GM12878 (cell line): ENCODE measurements at regions of chr19 and their contacts with region 1.

Region 1: GRCh38 chr19:16628183-16628983 is at the start of gene MED26:
- DNase-seq: peak; percentile 53
- ATAC-seq: peak; percentile 88
- H3K4me3 ChIP-seq: peak within 1 kb of the TSS; percentile 94
- H3K27ac ChIP-seq: peak within 1 kb of the TSS; percentile 97
- H3K4me1 ChIP-seq: peaks cover 25% of the 10 kb centered on the region
- H3K27me3 ChIP-seq: no peaks in the 10 kb centered on the region
- CTCF ChIP-seq: 0 out of 6 replicates have a peak, but pooled peaks of 1 of the 3 experiments have one; percentile 3
- EP300 ChIP-seq: no peak
- POLR2A ChIP-seq: peak; percentile 88
- RAD21 ChIP-seq: peak; percentile 20; the same call in 1 of the 2 replicates
- polyA plus RNA-seq, gene MED26: 1.1 to 2.2 TPM

Region 2: DNA sequence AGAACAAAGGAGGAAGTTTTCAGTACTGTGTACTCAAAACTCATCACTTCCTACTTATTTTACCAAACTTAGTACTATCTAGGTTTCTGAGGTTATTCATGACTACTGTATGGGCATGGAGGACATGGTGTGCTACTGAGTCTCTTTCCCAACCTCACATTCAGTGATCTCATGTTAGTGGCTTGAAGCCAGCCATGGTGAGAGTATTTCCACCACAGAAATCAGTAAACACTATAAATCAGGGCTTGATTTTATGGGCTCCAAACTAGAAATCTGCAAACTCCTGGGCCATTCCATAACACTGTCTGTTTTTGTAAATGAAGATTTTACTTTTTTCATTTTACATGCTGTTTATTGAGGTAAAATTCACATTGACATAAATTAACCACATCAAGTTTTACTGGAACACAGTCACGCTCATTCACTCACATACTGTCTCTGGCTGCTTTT is 20.1 kb before region 1 on chr19:
- CTCF ChIA-PET with region 1: interaction called, 6 read pairs
- POLR2A ChIA-PET with region 1: interaction called, 11 read pairs
- RAD21 ChIA-PET with region 1: interaction called, 4 read pairs
- SMC1A ChIA-PET with region 1: interaction called, 26 read pairs
- in situ Hi-C with region 1: no loop called
- intact Hi-C with region 1: no loop called
- DNase-seq: no peak
- ATAC-seq: peak; percentile 33
- H3K4me3 ChIP-seq: no peak overlapping the region
- H3K27ac ChIP-seq: no peak overlapping the region
- H3K4me1 ChIP-seq: peaks cover 43% of the 10 kb centered on the region
- H3K27me3 ChIP-seq: no peaks in the 10 kb centered on the region
- CTCF ChIP-seq: no peak
- EP300 ChIP-seq: no peak
- POLR2A ChIP-seq: no peak
- RAD21 ChIP-seq: no peak

Region 3: GRCh38 chr19:16615808-16616207 is 12.6 kb before region 1 on chr19:
- CTCF ChIA-PET with region 1: interaction called, 6 read pairs
- POLR2A ChIA-PET with region 1: interaction called, 11 read pairs
- RAD21 ChIA-PET with region 1: interaction called, 5 read pairs
- SMC1A ChIA-PET with region 1: interaction called, 26 read pairs
- in situ Hi-C with region 1: no loop called
- intact Hi-C with region 1: no loop called
- DNase-seq: no peak
- ATAC-seq: peak; percentile 42
- H3K4me3 ChIP-seq: no peak overlapping the region
- H3K27ac ChIP-seq: no peak overlapping the region
- H3K4me1 ChIP-seq: peaks cover 42% of the 10 kb centered on the region
- H3K27me3 ChIP-seq: no peaks in the 10 kb centered on the region
- CTCF ChIP-seq: no peak
- EP300 ChIP-seq: no peak
- POLR2A ChIP-seq: no peak
- RAD21 ChIP-seq: no peak

Region 4: GRCh38 chr19:16659831-16660708 is 31.7 kb after region 1 on chr19 and contains the start of gene SMIM7:
- CTCF ChIA-PET with region 1: interaction called, 7 read pairs
- POLR2A ChIA-PET with region 1: interaction called, 18 read pairs
- RAD21 ChIA-PET with region 1: interaction called, 6 read pairs
- SMC1A ChIA-PET with region 1: no interaction called
- in situ Hi-C with region 1: no loop called
- intact Hi-C with region 1: loop called (anchors 5 kb)
- DNase-seq: peak; percentile 98
- ATAC-seq: peak; percentile 97
- H3K4me3 ChIP-seq: peak within 1 kb of the TSS; percentile 99
- H3K27ac ChIP-seq: peak within 1 kb of the TSS; percentile 94
- H3K4me1 ChIP-seq: peaks cover 18% of the 10 kb centered on the region
- H3K27me3 ChIP-seq: no peaks in the 10 kb centered on the region
- CTCF ChIP-seq: peak in 1 of 3 experiments; percentile 47; a peak in 2 of 6 replicates
- EP300 ChIP-seq: no peak
- POLR2A ChIP-seq: peak; percentile 91
- RAD21 ChIP-seq: no peak
- polyA plus RNA-seq, gene SMIM7: 157 to 170 TPM

Region 5: DNA sequence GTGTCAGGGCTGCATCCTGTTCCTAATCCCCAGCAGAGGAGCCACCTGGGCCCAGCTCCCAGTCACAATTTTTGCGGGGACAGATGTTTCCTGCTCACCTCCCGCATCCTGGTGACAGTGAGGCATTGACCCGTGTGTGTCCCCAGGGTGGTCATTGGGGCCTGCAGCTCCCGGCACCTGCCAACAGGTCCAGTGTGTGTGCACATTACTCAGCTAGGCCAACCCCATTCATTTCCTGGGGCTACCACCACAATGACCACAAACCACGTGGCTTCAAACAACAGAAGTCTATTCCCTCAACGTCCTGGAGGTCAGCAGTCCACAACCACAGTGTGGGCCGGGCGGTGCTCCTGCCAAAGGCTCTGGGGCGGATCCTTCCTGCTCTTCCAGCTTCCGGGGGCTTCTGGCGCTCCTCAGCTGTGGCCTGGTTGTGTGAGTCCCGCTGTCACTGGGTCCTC is 248.6 kb after region 1 on chr19:
- CTCF ChIA-PET with region 1: no interaction called
- POLR2A ChIA-PET with region 1: no interaction called
- RAD21 ChIA-PET with region 1: no interaction called
- SMC1A ChIA-PET with region 1: no interaction called
- in situ Hi-C with region 1: no loop called
- intact Hi-C with region 1: no loop called
- DNase-seq: no peak
- ATAC-seq: peak; percentile 64
- H3K4me3 ChIP-seq: no peak overlapping the region
- H3K27ac ChIP-seq: no peak overlapping the region
- H3K4me1 ChIP-seq: peaks cover 6% of the 10 kb centered on the region
- H3K27me3 ChIP-seq: no peaks in the 10 kb centered on the region
- CTCF ChIP-seq: no peak
- EP300 ChIP-seq: no peak
- POLR2A ChIP-seq: no peak
- RAD21 ChIP-seq: no peak